ENCODE measurements at regions of chr11 and their contacts with region 1.

Region 1: DNA sequence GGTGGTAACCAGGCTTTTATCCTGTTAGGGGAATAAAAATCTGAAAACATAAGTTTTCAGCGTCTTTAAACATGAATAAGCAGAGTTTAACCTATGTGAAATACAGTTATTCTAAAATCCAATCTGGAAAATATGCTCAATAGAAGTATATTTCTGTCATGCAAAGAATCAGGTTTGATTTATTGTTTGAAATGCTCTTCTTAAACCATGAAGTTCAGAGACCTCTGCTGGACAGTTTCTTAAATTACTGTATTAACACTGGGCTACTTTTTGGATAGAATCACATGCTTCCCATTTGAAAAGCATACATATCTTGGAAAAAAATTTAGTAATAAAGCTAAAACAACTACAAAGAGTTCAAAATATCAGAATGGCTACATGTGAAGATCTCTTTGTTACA is 25.4 kb downstream of the APIP start:
- DNase-seq: no peak
- ATAC-seq: no peak
- H3K4me3 Mint-ChIP-seq: no peak overlapping the region
- H3K27ac Mint-ChIP-seq: no peak overlapping the region
- H3K4me1 Mint-ChIP-seq: no peaks in the 10 kb centered on the region
- H3K27me3 Mint-ChIP-seq: no peaks in the 10 kb centered on the region
- CTCF ChIP-seq: peak; percentile 39

Region 2: DNA sequence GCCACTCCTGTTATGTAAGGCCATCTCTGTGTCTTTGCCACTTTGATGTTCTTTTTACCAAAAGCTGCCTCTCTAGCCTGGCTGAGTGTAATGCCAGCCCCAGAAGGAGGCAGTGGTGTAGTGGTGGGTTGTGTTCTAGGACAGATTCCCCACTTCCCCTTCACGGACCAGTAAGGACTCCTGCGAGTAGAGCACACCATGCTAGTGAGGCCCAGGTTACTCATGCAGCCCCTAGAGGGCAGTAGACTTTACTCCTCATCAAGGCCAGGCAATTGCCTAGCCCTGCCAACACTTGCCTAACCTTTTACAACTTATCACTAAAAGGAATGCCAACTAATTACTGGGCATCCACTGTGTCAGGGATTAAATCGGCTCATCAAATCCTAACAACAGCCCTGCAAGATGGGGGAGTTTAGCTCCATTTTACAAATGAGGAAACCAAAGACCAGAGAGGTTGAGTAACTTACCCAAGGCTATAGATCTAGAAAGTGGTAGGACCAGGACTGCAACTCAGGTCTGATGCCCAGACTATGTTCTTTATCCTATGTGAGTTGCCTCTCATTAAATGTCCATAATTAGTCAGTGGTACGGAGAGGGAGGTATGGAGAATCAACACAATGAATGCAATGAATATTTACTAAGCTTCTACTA is 50.0 kb before region 1 on chr11:
- CTCF ChIA-PET with region 1: interaction called, 14 read pairs
- POLR2A ChIA-PET with region 1: no interaction called
- intact Hi-C with region 1: no loop called
- DNase-seq: peak; percentile 27
- ATAC-seq: peak; percentile 60
- H3K4me3 Mint-ChIP-seq: no peak overlapping the region
- H3K27ac Mint-ChIP-seq: no peak overlapping the region
- H3K4me1 Mint-ChIP-seq: no peaks in the 10 kb centered on the region
- H3K27me3 Mint-ChIP-seq: peaks cover 16% of the 10 kb centered on the region
- CTCF ChIP-seq: peak; percentile 50

Region 3: DNA sequence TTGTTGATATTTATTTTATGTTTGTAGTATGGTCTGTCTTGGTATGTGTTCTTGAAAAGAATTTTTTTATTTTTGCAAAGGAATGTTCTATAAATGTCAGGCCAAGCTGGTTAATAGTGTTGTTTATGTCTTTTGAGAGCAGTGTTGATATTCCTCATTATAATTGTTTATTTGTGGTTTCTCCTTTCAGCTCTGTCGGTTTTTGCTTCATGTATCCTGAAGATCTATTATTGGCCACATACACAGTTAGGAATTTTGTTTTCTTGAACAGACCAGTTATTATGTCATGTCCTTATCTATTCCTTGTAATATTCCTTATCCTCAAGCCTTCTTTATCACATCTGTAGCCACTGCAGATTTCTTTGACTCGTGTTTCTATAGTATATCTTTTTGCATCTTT is 82.1 kb after region 1 on chr11:
- CTCF ChIA-PET with region 1: no interaction called
- POLR2A ChIA-PET with region 1: no interaction called
- intact Hi-C with region 1: no loop called
- DNase-seq: no peak
- ATAC-seq: no peak
- H3K4me3 Mint-ChIP-seq: no peak overlapping the region
- H3K27ac Mint-ChIP-seq: no peak overlapping the region
- H3K4me1 Mint-ChIP-seq: peaks cover 8% of the 10 kb centered on the region
- H3K27me3 Mint-ChIP-seq: no peaks in the 10 kb centered on the region
- CTCF ChIP-seq: no peak

Region 4: DNA sequence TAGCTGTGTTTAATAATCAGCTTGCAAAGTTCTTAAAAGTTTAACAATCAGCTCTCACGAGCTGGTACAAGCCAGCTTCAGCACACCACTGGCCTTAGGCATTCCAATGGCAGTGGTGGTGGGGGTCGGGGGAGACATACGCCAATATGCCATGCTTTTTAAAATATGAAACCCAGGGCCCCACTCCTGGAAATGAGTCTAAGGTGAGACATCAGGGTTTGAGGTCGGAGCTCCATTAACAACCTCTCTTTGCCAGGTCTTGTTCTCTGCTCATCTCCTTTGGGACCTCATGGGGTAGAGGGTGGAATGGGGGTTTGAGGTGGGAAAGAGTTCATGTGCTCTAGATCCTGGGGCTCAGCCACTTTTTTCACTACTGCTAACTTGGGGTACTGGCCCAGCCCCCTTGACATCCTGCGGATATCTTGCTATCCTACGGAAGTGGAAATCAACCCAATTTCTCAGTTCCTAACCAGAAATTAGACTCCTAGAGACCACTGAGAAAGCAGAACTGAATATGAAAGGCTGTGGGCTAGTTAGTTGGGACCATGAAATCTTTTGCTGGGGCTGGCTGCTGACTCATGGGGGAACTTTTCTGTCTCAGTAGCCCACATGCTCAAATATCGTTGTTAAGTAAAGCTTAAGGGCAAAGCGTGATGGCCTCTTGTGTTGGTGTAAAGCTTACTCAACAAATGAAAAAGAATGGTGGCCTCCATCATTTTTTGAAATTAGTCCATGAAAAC is 115.7 kb after region 1 on chr11:
- CTCF ChIA-PET with region 1: no interaction called
- POLR2A ChIA-PET with region 1: no interaction called
- intact Hi-C with region 1: no loop called
- DNase-seq: peak; percentile 77
- ATAC-seq: peak; percentile 87
- H3K4me3 Mint-ChIP-seq: no peak overlapping the region
- H3K27ac Mint-ChIP-seq: peak overlapping the region; percentile 24
- H3K4me1 Mint-ChIP-seq: peaks cover 60% of the 10 kb centered on the region
- H3K27me3 Mint-ChIP-seq: no peaks in the 10 kb centered on the region
- CTCF ChIP-seq: no peak

Measured in activated CD8-positive, alpha-beta T cell treated with anti-CD3 and anti-CD28 coated beads for 36 hours (primary cell).